Right ventricle myocardium inferior (tissue), 1 donor: ENCODE measurements at regions of chr16 and their contacts with region 1.

Region 1: DNA sequence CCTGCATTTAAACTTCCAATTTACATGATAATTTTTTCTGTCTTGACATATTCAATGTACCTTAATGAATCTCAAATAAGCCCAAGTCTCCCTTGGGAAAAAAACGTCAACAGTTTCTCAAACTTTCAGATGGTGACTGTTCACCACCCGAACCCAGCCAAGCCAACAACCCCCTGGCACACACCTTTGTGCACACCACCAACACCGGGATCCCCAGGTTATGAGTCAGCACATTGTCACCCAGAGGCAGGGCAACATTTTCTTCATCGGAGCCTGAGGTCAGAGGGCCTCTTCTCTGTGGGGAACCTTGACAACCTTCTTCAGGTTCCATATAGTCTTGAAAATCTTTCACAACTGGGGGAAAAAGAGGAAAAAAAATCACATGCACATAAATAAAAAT is 15.5 kb downstream of the DYNC1LI2 start:
- DNase-seq: no peak
- ATAC-seq: no peak

Region 2: DNA sequence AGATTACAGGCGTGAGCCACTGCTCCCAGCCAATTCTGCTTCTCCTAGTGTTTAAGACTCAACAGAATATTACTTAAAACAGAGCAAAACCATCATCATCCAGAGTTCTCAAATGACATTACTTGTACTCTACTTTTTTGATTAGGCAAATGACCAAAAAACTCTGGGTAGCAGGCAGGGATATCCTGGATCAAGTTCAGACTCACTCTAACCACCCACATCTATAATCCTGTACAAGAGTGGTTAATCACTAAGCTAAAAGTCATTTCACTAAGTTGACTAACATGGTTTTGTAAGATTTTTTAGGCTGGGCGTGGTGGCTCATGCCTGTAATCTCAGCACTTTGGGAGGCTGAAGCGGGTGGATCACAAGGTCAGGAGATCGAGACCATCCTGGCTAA is 88.1 kb after region 1 on chr16:
- intact Hi-C with region 1: loop called (anchors 10 kb)
- DNase-seq: no peak
- ATAC-seq: no peak